GM12878 (cell line): ENCODE measurements at regions of chr1 and their contacts with region 1.

Region 1: DNA sequence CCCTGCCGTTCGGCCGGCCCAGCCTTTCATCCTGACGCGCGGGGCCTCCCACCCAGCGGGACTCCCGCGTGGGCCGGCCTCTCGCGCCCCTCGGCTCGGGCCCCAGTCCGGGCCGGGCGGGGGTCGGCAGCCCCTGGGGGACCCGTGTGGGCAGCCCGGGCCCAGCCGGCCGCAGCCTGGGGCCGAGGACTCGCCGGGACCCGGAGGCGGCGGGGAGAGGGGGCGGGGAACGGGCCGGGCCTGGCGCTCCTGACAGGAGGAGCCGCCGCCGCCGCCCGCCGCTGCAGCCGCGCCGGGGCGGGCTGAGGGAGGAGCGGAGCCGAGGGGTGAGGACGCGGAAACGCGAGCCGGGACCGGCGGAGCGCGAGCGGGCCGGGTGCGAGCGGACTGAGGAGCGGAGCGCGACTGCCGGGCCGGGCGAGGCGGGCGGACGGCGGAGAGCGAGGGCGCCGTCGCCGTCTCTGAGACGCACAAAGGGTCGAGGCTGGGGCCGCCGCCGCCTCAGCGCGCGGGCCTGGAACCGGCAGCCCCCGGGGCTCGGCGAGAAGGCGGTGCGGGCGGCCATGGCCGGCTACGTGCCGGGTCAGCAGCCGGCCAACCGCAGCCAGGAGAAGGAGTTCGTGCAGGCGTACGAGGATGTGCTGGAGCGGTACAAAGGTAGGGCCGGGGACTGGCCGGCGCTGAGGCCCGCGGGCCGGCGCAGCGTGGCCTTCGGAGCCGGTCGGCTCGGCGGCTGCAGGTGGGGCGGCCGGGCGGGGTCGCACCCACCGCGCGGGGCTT is 79.1 kb downstream of the NDUFS5 start:
- DNase-seq: no peak
- ATAC-seq: peak; percentile 51
- H3K4me3 ChIP-seq: peak overlapping the region; percentile 94
- H3K27ac ChIP-seq: peak overlapping the region; percentile 67
- H3K4me1 ChIP-seq: peaks cover 40% of the 10 kb centered on the region
- H3K27me3 ChIP-seq: no peaks in the 10 kb centered on the region
- CTCF ChIP-seq: no peak
- EP300 ChIP-seq: no peak
- POLR2A ChIP-seq: peak; percentile 75
- RAD21 ChIP-seq: no peak

Region 2: GRCh38 chr1:39158327-39159086 is 53.3 kb after region 1 on chr1:
- CTCF ChIA-PET with region 1: interaction called, 4 read pairs
- POLR2A ChIA-PET with region 1: interaction called, 3 read pairs
- RAD21 ChIA-PET with region 1: interaction called, 5 read pairs
- SMC1A ChIA-PET with region 1: interaction called, 10 read pairs
- in situ Hi-C with region 1: no loop called
- intact Hi-C with region 1: no loop called
- DNase-seq: peak; percentile 37
- ATAC-seq: peak; percentile 88
- H3K4me3 ChIP-seq: no peak overlapping the region
- H3K27ac ChIP-seq: no peak overlapping the region
- H3K4me1 ChIP-seq: peaks cover 2% of the 10 kb centered on the region; the same call in 1 of the 2 replicates
- H3K27me3 ChIP-seq: no peaks in the 10 kb centered on the region
- CTCF ChIP-seq: no peak
- EP300 ChIP-seq: no peak
- POLR2A ChIP-seq: no peak
- RAD21 ChIP-seq: no peak

Region 3: DNA sequence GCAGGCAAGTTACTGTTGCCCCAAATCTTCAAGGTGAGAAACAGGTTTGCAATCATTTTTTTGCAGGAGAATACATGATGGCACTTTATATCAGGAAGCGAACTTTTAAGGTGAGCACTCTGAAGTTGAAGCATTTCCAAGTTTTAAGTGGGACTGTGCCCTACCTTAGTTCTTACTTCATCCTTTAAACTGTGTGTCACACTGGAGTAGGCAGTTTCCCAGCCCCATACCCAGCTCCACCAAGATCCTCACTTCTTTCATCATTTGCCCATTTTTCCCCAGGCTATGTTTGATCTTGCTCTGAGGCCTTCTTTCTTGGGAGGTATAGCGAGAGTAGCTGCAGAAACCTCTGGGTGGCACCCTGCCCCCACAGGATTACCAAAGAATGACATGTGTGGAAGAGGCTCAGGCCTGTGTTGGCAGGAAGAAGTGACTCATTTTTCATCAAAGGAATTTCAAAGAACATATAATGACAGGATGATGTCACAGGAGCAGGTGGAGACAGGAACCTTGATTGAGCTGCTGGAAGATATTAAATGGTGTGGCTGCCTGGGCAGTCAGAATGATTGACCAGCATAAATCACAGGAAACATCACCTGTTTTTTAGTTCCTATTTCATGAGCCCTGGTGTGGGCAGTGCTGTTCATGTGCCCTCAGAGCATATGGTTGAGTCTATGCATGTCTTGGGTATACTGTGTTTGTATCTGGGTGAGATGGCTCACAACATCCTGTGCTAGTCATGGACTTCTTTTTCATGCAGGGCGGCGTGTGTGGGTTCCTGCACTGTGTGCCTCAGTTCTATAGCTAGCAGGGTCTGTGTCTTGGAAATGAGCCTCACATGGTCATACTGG is 78.5 kb after region 1 on chr1:
- CTCF ChIA-PET with region 1: interaction called, 465 read pairs
- POLR2A ChIA-PET with region 1: interaction called, 4 read pairs
- RAD21 ChIA-PET with region 1: interaction called, 304 read pairs
- SMC1A ChIA-PET with region 1: interaction called, 164 read pairs
- in situ Hi-C with region 1: no loop called
- intact Hi-C with region 1: no loop called
- DNase-seq: no peak
- ATAC-seq: peak; percentile 87
- H3K4me3 ChIP-seq: no peak overlapping the region
- H3K27ac ChIP-seq: peak overlapping the region; percentile 1; the same call in 1 of the 2 replicates
- H3K4me1 ChIP-seq: peaks cover 15% of the 10 kb centered on the region
- H3K27me3 ChIP-seq: no peaks in the 10 kb centered on the region
- CTCF ChIP-seq: peak; percentile 55 to 59 (median 57)
- EP300 ChIP-seq: no peak
- POLR2A ChIP-seq: no peak
- RAD21 ChIP-seq: peak; percentile 45

Region 4: GRCh38 chr1:39305555-39305954 is 200.3 kb after region 1 on chr1:
- CTCF ChIA-PET with region 1: no interaction called
- POLR2A ChIA-PET with region 1: interaction called, 12 read pairs
- RAD21 ChIA-PET with region 1: no interaction called
- SMC1A ChIA-PET with region 1: no interaction called
- in situ Hi-C with region 1: no loop called
- intact Hi-C with region 1: no loop called
- DNase-seq: peak; percentile 5
- ATAC-seq: peak; percentile 42; the same call in 2 of the 3 replicates
- H3K4me3 ChIP-seq: no peak overlapping the region
- H3K27ac ChIP-seq: no peak overlapping the region
- H3K4me1 ChIP-seq: no peaks in the 10 kb centered on the region
- H3K27me3 ChIP-seq: no peaks in the 10 kb centered on the region
- CTCF ChIP-seq: no peak
- EP300 ChIP-seq: no peak
- POLR2A ChIP-seq: no peak
- RAD21 ChIP-seq: no peak